ENCODE measurements at regions of chr9 and their contacts with region 1.

Region 1: DNA sequence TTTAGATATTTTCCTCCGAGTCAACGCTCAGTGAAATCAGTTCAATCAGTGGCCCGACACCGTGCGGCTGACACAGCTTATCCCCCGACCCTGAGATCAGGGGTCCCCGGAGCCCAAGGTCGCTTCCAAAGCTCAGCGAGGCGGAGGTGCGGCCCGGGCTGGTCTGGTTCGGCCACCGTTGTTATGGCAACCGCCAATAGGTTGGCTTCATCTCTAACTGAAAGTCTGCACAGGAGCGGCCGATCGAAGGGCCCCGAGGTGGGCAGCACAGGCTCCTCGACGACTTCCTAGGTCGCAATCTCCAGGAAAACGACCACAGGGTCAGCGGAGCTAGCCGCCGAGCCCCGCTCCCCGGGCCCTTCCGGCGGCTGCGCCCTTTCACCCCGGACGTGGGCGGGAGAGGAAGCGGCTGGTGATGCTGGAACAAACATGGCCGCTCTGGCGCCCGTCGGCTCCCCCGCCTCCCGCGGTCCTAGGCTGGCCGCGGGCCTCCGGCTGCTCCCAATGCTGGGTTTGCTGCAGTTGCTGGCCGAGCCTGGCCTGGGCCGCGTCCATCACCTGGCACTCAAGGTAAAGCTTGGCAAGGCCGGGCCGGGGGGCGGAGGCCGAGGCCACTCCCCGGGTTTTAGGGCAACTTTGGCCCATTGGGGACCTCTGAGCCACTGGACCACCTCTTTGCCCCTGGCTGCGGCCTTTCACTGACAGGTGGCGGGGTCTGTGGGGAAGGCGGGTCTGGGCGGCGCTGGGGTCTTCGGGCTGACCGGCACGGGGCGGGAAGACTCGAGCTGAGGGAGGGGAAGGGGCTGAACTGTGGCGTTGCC is at the start of gene GPR107:
- DNase-seq: peak; percentile 82
- ATAC-seq: peak; percentile 94
- H3K4me3 Mint-ChIP-seq: peak within 1 kb of the TSS; percentile 93
- H3K27ac Mint-ChIP-seq: peak within 1 kb of the TSS; percentile 93
- H3K4me1 Mint-ChIP-seq: peaks cover 45% of the 10 kb centered on the region
- H3K27me3 Mint-ChIP-seq: no peaks in the 10 kb centered on the region
- total RNA-seq, gene GPR107: 22.5 to 24.4 TPM

Region 2: GRCh38 chr9:130069048-130069447 is 15.3 kb after region 1 on chr9:
- CTCF ChIA-PET with region 1: interaction called, 10 read pairs
- POLR2A ChIA-PET with region 1: interaction called, 9 read pairs
- DNase-seq: no peak
- ATAC-seq: no peak
- H3K4me3 Mint-ChIP-seq: no peak overlapping the region
- H3K27ac Mint-ChIP-seq: no peak overlapping the region
- H3K4me1 Mint-ChIP-seq: peaks cover 19% of the 10 kb centered on the region
- H3K27me3 Mint-ChIP-seq: no peaks in the 10 kb centered on the region

Region 3: GRCh38 chr9:130167927-130168326 is 114.2 kb after region 1 on chr9:
- CTCF ChIA-PET with region 1: no interaction called
- POLR2A ChIA-PET with region 1: no interaction called
- DNase-seq: no peak
- ATAC-seq: no peak
- H3K4me3 Mint-ChIP-seq: no peak overlapping the region
- H3K27ac Mint-ChIP-seq: no peak overlapping the region
- H3K4me1 Mint-ChIP-seq: peaks cover 9% of the 10 kb centered on the region
- H3K27me3 Mint-ChIP-seq: peaks cover 17% of the 10 kb centered on the region

Region 4: GRCh38 chr9:130183133-130183762 is 129.5 kb after region 1 on chr9:
- CTCF ChIA-PET with region 1: no interaction called
- POLR2A ChIA-PET with region 1: no interaction called
- DNase-seq: no peak
- ATAC-seq: no peak
- H3K4me3 Mint-ChIP-seq: no peak overlapping the region
- H3K27ac Mint-ChIP-seq: no peak overlapping the region
- H3K4me1 Mint-ChIP-seq: peaks cover 2% of the 10 kb centered on the region
- H3K27me3 Mint-ChIP-seq: no peaks in the 10 kb centered on the region

Measured in activated CD8-positive, alpha-beta T cell treated with anti-CD3 and anti-CD28 coated beads, Interleukin-2, amount 10 ng/mL, durations not matched to agents 7 days and 5 days (primary cell).